ENCODE measurements at regions of chr13 and their contacts with region 1.

Region 1: DNA sequence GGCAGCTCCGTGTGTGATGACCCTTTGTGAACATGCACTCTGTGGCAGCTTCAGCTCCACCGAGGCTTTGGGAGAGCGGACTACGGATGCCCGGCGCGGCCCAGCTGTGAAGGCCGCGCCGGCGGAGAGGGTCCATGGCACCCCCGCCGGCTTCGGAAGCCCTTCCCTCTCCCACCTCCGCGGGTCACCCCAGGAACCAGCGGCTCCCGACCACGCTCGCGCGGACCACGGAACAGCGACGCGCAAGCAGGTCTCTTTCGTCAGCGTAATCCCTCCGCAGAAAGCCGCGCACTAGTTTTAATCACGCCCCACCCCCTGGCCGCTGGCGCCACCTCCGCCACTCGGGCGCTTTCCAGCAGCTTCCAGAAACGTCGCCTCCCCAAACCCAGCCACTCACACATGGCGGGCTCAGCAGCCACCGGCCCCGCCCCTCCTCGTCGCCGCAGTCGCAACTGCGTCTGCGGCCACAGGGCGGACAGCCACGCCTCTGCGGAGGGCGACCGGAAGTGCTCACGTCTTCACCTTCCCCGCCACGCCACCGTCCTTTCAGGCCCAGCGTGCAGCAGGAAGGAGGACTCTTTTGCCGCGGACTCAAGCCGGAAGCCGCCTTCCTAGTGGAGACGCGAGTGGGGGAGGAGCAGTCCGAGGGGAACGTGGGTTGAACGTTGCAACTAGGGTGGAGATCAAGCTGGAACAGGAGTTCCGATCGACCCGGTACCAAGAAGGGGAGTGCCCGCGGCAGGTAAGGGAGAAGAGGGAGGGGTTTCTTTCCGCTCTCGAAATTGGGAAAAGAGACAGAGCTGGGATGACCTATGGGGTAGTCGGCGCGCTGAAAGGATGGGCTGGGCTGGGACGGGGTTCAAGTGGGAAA is at the start of gene USPL1:
- DNase-seq: peak; percentile 98 to 100
- ATAC-seq: peak; percentile 84 to 96 (median 88)
- H3K4me3 ChIP-seq: peak within 1 kb of the TSS; percentile 100
- H3K4me3 Mint-ChIP-seq: no peak within 1 kb of the TSS
- H3K27ac ChIP-seq: peak within 1 kb of the TSS; percentile 98
- H3K27ac Mint-ChIP-seq: no peak within 1 kb of the TSS
- H3K4me1 ChIP-seq: peaks cover 7% of the 10 kb centered on the region
- H3K4me1 Mint-ChIP-seq: peaks cover 0 to 5% of the 10 kb centered on the region in 2 donors
- H3K27me3 ChIP-seq: no peaks in the 10 kb centered on the region
- H3K27me3 Mint-ChIP-seq: no peaks in the 10 kb centered on the region
- CTCF ChIP-seq: no peak
- total RNA-seq, gene USPL1: 34.8 to 39.0 (median 36.9) TPM

Region 2: GRCh38 chr13:29418026-29418425 is 1199.5 kb before region 1 on chr13:
- intact Hi-C with region 1: no loop called
- DNase-seq: no peak
- ATAC-seq: no peak
- H3K4me3 ChIP-seq: no peak overlapping the region
- H3K4me3 Mint-ChIP-seq: no peak overlapping the region
- H3K27ac ChIP-seq: no peak overlapping the region
- H3K27ac Mint-ChIP-seq: no peak overlapping the region
- H3K4me1 ChIP-seq: no peaks in the 10 kb centered on the region
- H3K4me1 Mint-ChIP-seq: no peaks in the 10 kb centered on the region
- H3K27me3 ChIP-seq: no peaks in the 10 kb centered on the region
- H3K27me3 Mint-ChIP-seq: peaks cover 8 to 41% of the 10 kb centered on the region in 2 donors
- CTCF ChIP-seq: no peak

Region 3: DNA sequence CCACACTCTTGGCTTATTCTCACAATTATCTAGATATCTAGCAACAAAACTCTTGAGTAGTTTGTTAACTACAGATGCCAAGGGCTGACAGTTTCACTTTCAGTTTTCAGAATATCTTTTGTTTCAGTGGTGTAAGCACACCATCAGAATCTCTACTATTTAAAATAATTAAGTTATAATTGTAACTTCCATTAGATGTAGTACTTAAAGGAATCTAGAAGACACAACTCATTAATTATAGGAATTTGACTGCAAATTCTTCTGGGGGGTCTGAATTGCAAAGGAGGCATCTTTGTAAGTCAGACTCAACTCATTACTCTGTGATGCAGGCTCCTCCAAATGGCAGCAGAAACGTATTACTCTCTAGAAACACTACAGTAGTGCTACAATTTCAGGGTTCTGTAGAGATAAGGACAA is 44.7 kb before region 1 on chr13:
- intact Hi-C with region 1: loop called (anchors 2 kb)
- DNase-seq: peak in 1 of 2 donors; percentile 67
- ATAC-seq: peak; percentile 69 to 77 (median 69)
- H3K4me3 ChIP-seq: peak overlapping the region; percentile 5
- H3K4me3 Mint-ChIP-seq: peak overlapping the region; percentile 75
- H3K27ac ChIP-seq: peak overlapping the region; percentile 66
- H3K27ac Mint-ChIP-seq: peak overlapping the region; percentile 80 to 83
- H3K4me1 ChIP-seq: peaks cover 25% of the 10 kb centered on the region
- H3K4me1 Mint-ChIP-seq: peaks cover 33 to 40% of the 10 kb centered on the region in 2 donors
- H3K27me3 ChIP-seq: no peaks in the 10 kb centered on the region
- H3K27me3 Mint-ChIP-seq: peaks cover 21 to 25% of the 10 kb centered on the region in 2 donors
- CTCF ChIP-seq: no peak

Region 4: DNA sequence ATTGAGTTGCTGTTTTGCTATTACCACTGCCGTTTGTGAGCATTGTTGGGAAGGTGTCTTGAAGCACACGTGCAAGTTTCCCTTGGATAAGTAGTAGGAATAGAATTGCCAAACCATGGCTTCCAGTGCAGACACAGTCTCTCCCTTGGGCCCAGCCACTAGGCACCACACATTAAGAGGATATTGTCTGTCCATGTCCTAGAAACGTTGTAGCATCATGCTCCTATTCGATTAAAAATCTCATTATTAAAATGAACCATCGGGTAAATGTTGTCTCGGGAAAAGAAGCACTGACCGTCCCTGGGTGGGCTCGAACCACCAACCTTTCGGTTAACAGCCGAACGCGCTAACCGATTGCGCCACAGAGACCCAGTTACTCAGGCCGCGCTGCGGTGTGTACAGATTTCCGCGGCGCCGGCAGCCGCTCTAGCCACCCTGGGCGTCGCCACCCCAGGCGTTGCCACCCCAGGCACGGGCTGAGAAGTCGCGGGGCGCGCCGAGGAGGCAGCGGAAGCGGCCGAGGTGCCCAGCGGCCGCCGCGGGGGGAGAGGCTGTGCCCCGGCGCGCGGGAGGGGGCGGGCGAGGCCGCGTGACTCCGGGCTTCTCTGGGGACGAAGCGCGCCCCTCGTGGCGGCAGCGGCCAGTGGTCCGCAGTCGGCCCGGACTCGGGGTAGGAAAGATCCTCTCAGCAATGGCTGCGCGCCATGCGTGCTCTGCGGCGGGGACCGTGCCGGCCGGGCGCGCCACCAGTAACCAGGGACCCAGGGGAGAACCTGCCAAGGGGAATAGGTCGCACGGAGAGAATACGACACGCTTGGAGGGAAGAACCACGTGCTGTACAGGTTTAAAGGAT is 56.3 kb after region 1 on chr13:
- intact Hi-C with region 1: loop called (anchors 1 kb)
- DNase-seq: peak; percentile 93 to 95
- ATAC-seq: peak; percentile 95 to 99 (median 97)
- H3K4me3 ChIP-seq: peak overlapping the region; percentile 79
- H3K4me3 Mint-ChIP-seq: peak overlapping the region; percentile 95
- H3K27ac ChIP-seq: peak overlapping the region; percentile 83
- H3K27ac Mint-ChIP-seq: peak overlapping the region; percentile 94 to 96
- H3K4me1 ChIP-seq: peaks cover 10% of the 10 kb centered on the region
- H3K4me1 Mint-ChIP-seq: peaks cover 26 to 33% of the 10 kb centered on the region in 2 donors
- H3K27me3 ChIP-seq: no peaks in the 10 kb centered on the region
- H3K27me3 Mint-ChIP-seq: no peaks in the 10 kb centered on the region
- CTCF ChIP-seq: peak; percentile 77

Measured in natural killer cell (primary cell).